H1 (cell line): ENCODE measurements at regions of chr1 and their contacts with region 1.

Region 1: GRCh38 chr1:208270651-208271111 is 26.5 kb upstream of the PLXNA2 start:
- DNase-seq: no peak
- H3K4me3 ChIP-seq: no peak overlapping the region
- H3K27ac ChIP-seq: no peak overlapping the region
- H3K4me1 ChIP-seq: peaks cover 0 to 3% (median 1%) of the 10 kb centered on the region in 4 experiments; a peak in 1 of 7 replicates
- H3K27me3 ChIP-seq: no peaks in the 10 kb centered on the region; a peak in 1 of 7 replicates
- CTCF ChIP-seq: no peak
- EP300 ChIP-seq: no peak
- POLR2A ChIP-seq: no peak
- RAD21 ChIP-seq: no peak

Region 2: GRCh38 chr1:208177656-208178055 is 93.0 kb before region 1 on chr1:
- CTCF ChIA-PET with region 1: no interaction called
- POLR2A ChIA-PET with region 1: no interaction called
- DNase-seq: no peak
- H3K4me3 ChIP-seq: no peak overlapping the region
- H3K27ac ChIP-seq: no peak overlapping the region
- H3K4me1 ChIP-seq: peaks cover 11 to 29% (median 14%) of the 10 kb centered on the region in 4 experiments
- H3K27me3 ChIP-seq: no peaks in the 10 kb centered on the region; a peak in 2 of 7 replicates
- CTCF ChIP-seq: no peak
- EP300 ChIP-seq: no peak
- POLR2A ChIP-seq: no peak
- RAD21 ChIP-seq: no peak

Region 3: GRCh38 chr1:208251911-208252835 is 18.5 kb before region 1 on chr1:
- CTCF ChIA-PET with region 1: interaction called, 11 read pairs
- POLR2A ChIA-PET with region 1: no interaction called
- DNase-seq: peak in 1 of 2 experiments; percentile 84
- H3K4me3 ChIP-seq: peak overlapping the region in 1 of 4 experiments; percentile 22; a peak in 1 of 8 replicates
- H3K27ac ChIP-seq: no peak overlapping the region
- H3K4me1 ChIP-seq: peaks cover 0 to 7% (median under 1%) of the 10 kb centered on the region in 4 experiments; a peak in 5 of 7 replicates
- H3K27me3 ChIP-seq: peaks cover 3 to 15% (median 13%) of the 10 kb centered on the region in 4 experiments; a peak in 6 of 7 replicates
- CTCF ChIP-seq: peak; percentile 63 to 72 (median 69)
- EP300 ChIP-seq: no peak
- POLR2A ChIP-seq: no peak
- RAD21 ChIP-seq: peak; percentile 66 to 82